ENCODE measurements at regions of chr20 and their contacts with region 1.

Region 1: DNA sequence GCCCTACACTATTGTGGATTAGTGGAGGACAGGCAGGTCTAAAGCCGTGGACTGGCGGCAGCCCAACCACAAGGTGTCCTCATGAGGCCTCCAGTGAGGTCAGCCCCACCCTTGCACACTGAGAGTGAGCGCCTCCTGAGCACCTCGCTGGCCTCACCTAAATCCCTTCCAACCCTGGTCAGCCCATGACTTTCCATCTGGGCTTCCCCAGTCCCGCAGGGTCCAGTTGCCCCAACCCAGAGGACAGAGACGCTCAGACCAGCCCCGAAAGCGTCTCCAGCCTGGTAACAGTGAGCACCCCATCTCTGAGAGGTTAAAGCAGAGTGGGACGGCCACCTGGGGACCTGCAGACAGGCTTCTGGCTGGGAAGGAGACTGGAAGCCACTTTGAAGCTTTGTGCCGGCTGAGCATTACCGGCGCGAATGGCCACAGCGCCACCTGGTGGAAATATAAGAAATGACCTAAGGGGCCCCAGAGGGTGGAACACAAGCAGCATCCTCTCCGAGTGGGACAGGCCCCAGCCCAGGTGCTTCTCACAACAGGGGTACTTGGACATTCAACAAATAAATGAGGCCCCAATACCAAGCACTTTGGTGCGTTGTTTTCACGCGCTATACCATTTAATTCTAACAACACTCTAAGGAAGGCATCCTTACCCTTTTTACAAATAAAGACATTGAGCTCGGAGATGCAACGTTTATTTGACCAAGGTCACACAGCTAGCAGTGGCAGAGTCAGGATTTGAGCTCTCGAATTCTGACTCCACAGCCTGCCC is 65.7 kb upstream of the TOP1 start:
- DNase-seq: peak; percentile 80
- H3K4me3 ChIP-seq: no peak overlapping the region
- H3K27ac ChIP-seq: no peak overlapping the region
- H3K4me1 ChIP-seq: peaks cover 18% of the 10 kb centered on the region
- CTCF ChIP-seq: peak; percentile 95

Region 2: GRCh38 chr20:40160097-40160550 is 802.8 kb before region 1 on chr20:
- CTCF ChIA-PET with region 1: no interaction called
- POLR2A ChIA-PET with region 1: no interaction called
- intact Hi-C with region 1: loop called (anchors 5 kb)
- DNase-seq: peak; percentile 58
- H3K4me3 ChIP-seq: no peak overlapping the region
- H3K27ac ChIP-seq: no peak overlapping the region
- H3K4me1 ChIP-seq: no peaks in the 10 kb centered on the region
- CTCF ChIP-seq: peak; percentile 87

Region 3: GRCh38 chr20:40741507-40742106 is 221.3 kb before region 1 on chr20:
- CTCF ChIA-PET with region 1: interaction called, 4 read pairs
- POLR2A ChIA-PET with region 1: interaction called, 3 read pairs
- intact Hi-C with region 1: loop called (anchors 1 kb)
- DNase-seq: peak; percentile 88
- H3K4me3 ChIP-seq: no peak overlapping the region
- H3K27ac ChIP-seq: no peak overlapping the region
- H3K4me1 ChIP-seq: peaks cover 55% of the 10 kb centered on the region
- CTCF ChIP-seq: peak; percentile 97

Region 4: GRCh38 chr20:40892649-40893048 is 70.3 kb before region 1 on chr20:
- CTCF ChIA-PET with region 1: interaction called, 6 read pairs
- POLR2A ChIA-PET with region 1: no interaction called
- intact Hi-C with region 1: loop called (anchors 1 kb)
- DNase-seq: peak; percentile 85
- H3K4me3 ChIP-seq: no peak overlapping the region
- H3K27ac ChIP-seq: no peak overlapping the region
- H3K4me1 ChIP-seq: peaks cover 46% of the 10 kb centered on the region
- CTCF ChIP-seq: peak; percentile 75

Region 5: DNA sequence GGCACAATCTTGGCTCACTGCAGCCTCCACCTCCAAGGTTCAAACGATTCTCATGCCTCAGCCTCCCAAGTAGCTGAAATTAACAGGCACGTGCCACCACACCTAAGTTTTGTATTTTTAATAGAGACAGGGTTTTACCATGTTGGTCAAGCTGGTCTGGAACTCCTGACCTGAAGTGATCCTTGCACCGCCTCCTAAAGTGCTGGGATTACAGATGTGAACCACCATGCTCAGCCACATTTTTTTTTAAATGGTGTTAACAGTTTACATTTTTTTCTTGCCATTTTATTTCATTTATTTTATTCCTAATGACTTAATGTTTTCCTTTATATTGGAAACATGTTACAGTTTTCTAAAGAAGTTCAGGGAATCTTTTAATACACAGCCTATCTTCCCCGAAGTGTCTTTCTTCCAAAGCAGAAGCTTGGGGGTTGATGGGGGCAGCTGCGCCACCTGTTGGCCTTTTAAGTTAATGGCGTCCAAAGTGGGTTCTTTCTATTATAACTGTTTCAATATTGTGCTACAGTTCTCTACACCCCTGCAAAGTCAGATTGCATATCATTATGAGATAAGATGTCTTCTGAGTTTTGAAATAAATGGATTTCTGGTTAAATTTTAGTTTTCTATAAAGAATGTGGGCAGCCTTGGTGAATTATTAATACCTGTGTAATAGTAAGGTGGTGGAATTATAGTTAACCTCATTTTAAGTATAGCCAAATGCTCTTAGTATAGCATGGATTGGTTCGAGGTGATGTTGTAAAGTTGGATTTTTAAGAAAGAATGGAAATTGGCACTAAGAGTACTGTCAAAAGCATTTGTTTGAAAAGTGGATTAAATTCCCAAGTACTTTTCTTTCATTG is 132.4 kb after region 1 on chr20:
- CTCF ChIA-PET with region 1: interaction called, 4 read pairs
- POLR2A ChIA-PET with region 1: interaction called, 4 read pairs
- intact Hi-C with region 1: loop called (anchors 1 kb)
- DNase-seq: peak; percentile 69
- H3K4me3 ChIP-seq: no peak overlapping the region
- H3K27ac ChIP-seq: no peak overlapping the region
- H3K4me1 ChIP-seq: no peaks in the 10 kb centered on the region
- CTCF ChIP-seq: peak; percentile 100

Region 6: GRCh38 chr20:41173161-41173721 is 210.3 kb after region 1 on chr20:
- CTCF ChIA-PET with region 1: no interaction called
- POLR2A ChIA-PET with region 1: no interaction called
- intact Hi-C with region 1: loop called (anchors 2 kb)
- DNase-seq: peak; percentile 64
- H3K4me3 ChIP-seq: no peak overlapping the region
- H3K27ac ChIP-seq: no peak overlapping the region
- H3K4me1 ChIP-seq: no peaks in the 10 kb centered on the region
- CTCF ChIP-seq: peak; percentile 95

Region 7: DNA sequence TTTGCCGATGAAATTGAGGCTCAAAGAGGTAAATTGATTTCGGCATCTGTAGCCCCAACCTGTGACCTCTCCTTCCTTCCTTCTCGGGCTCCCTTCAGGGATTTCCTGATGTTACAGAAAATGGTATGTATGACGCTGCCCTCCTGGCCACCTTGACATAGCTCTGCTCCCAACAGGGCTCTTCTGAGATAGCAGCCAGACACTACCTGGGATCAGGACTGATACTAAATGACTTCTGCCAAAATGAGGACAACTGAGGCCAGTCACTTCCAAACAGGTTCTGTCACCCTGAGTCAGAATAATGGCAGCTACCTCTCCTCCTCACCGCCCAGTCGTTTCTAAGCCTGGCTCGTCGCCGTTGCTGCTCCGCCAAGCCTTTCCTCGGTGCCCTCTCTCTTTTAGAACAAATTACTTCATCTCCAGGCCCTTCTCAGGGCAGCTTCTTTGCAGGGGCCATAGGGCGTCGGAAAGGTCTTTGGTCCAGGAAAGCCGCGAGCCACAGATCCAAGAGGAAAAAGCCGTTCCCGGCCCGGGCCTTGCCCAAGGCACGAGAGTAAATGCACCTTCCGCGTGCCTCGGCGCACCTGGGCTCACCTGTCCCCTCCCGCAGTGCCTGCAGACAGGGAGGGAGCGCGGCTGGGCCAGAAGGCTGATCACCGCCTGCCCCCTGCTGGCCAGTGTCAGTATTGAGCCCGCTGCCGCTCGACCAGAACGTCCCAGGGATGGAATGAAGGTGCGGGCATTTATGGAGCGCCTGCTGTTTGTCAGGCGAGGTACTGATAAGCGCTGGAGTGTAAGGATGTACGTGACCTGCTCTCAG is 376.8 kb after region 1 on chr20:
- CTCF ChIA-PET with region 1: no interaction called
- POLR2A ChIA-PET with region 1: interaction called, 3 read pairs
- intact Hi-C with region 1: loop called (anchors 1 kb)
- DNase-seq: peak; percentile 75
- H3K4me3 ChIP-seq: peak overlapping the region; percentile 30
- H3K27ac ChIP-seq: no peak overlapping the region
- H3K4me1 ChIP-seq: peaks cover 17% of the 10 kb centered on the region
- CTCF ChIP-seq: peak; percentile 97

Measured in OCI-LY7 (cell line).